Activated naive CD4-positive, alpha-beta T cell treated with anti-CD3 and anti-CD28 coated beads for 36 hours (primary cell): ENCODE measurements at regions of chr1 and their contacts with region 1.

Region 1: GRCh38 chr1:35882945-35883634 is at the start of gene AGO1:
- DNase-seq: peak; percentile 97
- H3K4me3 Mint-ChIP-seq: peak within 1 kb of the TSS; percentile 89
- H3K27ac Mint-ChIP-seq: peak within 1 kb of the TSS; percentile 37
- H3K4me1 Mint-ChIP-seq: peaks cover 43% of the 10 kb centered on the region
- H3K27me3 Mint-ChIP-seq: no peaks in the 10 kb centered on the region
- total RNA-seq, gene AGO1: 24.9 to 25.3 TPM

Region 2: GRCh38 chr1:35807614-35808449 is 75.3 kb before region 1 on chr1 and contains the start of gene AGO4:
- CTCF ChIA-PET with region 1: no interaction called
- intact Hi-C with region 1: loop called (anchors 5 kb)
- DNase-seq: peak; percentile 18
- H3K4me3 Mint-ChIP-seq: peak within 1 kb of the TSS; percentile 83
- H3K27ac Mint-ChIP-seq: peak within 1 kb of the TSS; percentile 71
- H3K4me1 Mint-ChIP-seq: peaks cover 35% of the 10 kb centered on the region
- H3K27me3 Mint-ChIP-seq: no peaks in the 10 kb centered on the region
- total RNA-seq, gene AGO4: 2.0 to 3.1 TPM

Region 3: GRCh38 chr1:35894183-35894582 is 11.1 kb after region 1 on chr1:
- CTCF ChIA-PET with region 1: interaction called, 10 read pairs
- intact Hi-C with region 1: no loop called
- DNase-seq: no peak
- H3K4me3 Mint-ChIP-seq: no peak overlapping the region
- H3K27ac Mint-ChIP-seq: peak overlapping the region; percentile 35
- H3K4me1 Mint-ChIP-seq: no peaks in the 10 kb centered on the region
- H3K27me3 Mint-ChIP-seq: no peaks in the 10 kb centered on the region

Region 4: GRCh38 chr1:35930593-35931445 is 47.7 kb after region 1 on chr1 and contains the start of gene AGO3:
- CTCF ChIA-PET with region 1: interaction called, 3 read pairs
- intact Hi-C with region 1: loop called (anchors 1 kb)
- DNase-seq: peak; percentile 92
- H3K4me3 Mint-ChIP-seq: peak within 1 kb of the TSS; percentile 94
- H3K27ac Mint-ChIP-seq: peak within 1 kb of the TSS; percentile 90
- H3K4me1 Mint-ChIP-seq: peaks cover 35% of the 10 kb centered on the region
- H3K27me3 Mint-ChIP-seq: no peaks in the 10 kb centered on the region
- total RNA-seq, gene AGO3: 25.1 to 28.2 TPM

Region 5: DNA sequence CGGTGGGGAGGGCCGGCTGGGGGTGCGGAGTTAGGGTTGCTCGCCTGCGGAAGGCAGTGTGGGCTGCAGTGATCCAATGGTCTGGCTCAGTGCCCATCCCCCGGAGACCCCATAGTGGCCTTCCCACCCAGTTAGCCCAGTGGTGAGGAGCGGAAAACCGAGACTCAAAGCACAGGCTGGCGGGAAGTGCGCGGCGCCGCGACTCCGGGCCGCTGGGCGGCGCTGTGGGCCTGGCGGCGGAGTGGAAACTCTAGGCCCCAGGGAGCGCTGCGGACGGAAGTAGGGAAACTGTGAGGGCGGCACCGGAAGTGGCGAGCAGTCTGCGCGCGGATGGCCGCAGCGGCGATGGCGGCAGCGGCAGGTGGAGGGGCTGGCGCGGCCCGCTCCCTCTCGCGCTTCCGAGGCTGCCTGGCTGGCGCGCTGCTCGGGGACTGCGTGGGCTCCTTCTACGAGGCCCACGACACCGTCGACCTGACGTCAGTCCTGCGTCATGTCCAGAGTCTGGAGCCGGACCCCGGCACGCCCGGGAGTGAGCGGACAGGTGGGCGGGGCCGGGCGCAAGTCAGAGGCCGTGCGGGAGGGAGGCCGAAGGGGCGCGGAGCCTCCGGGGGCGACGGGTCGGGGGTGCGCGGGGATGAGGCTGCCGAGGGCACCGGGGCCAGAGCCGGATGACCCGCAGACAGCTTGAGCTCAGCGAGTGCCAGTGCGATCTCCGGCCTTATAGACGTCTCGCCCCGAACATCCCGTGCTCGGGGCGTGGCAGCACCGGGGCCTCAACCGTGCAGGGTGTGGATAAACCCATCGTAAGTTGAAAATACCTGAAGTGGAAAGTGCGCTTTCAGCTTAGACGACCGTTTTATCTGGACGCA is 205.7 kb after region 1 on chr1 and contains the start of gene ADPRS:
- CTCF ChIA-PET with region 1: no interaction called
- intact Hi-C with region 1: loop called (anchors 1 kb)
- DNase-seq: peak; percentile 92
- H3K4me3 Mint-ChIP-seq: peak within 1 kb of the TSS; percentile 87
- H3K27ac Mint-ChIP-seq: peak within 1 kb of the TSS; percentile 72
- H3K4me1 Mint-ChIP-seq: peaks cover 20% of the 10 kb centered on the region
- H3K27me3 Mint-ChIP-seq: peaks cover 21% of the 10 kb centered on the region
- total RNA-seq, gene ADPRS: 23.2 to 24.6 TPM